Activated T-helper 1 cell treated with anti-CD3 and anti-CD28 coated beads, Interleukin-12 subunit alpha, Interleukin-12 subunit beta, Interleukin-2, Interleukin-4 antibody, amounts not matched to agents 30 ng/mL and 10 ng/mL and 1 ng/mL, durations not matched to agents 14 hours and 24 hours and 36 hours (primary cell): ENCODE measurements at regions of chr1 and their contacts with region 1.

Region 1: GRCh38 chr1:151534665-151535278 is 5.3 kb upstream of the TUFT1 start:
- DNase-seq: peak; percentile 67
- H3K4me3 Mint-ChIP-seq: no peak overlapping the region
- H3K27ac Mint-ChIP-seq: no peak overlapping the region
- H3K4me1 Mint-ChIP-seq: no peaks in the 10 kb centered on the region
- H3K27me3 Mint-ChIP-seq: peaks cover 5% of the 10 kb centered on the region

Region 2: GRCh38 chr1:151594143-151594625 is 59.4 kb after region 1 on chr1:
- intact Hi-C with region 1: loop called (anchors 1 kb)
- DNase-seq: peak; percentile 75
- H3K4me3 Mint-ChIP-seq: peak overlapping the region; percentile 52
- H3K27ac Mint-ChIP-seq: no peak overlapping the region
- H3K4me1 Mint-ChIP-seq: peaks cover 12% of the 10 kb centered on the region
- H3K27me3 Mint-ChIP-seq: peaks cover 8% of the 10 kb centered on the region